HEK293 (cell line): ENCODE measurements at regions of chr5 and their contacts with region 1.

Region 1: DNA sequence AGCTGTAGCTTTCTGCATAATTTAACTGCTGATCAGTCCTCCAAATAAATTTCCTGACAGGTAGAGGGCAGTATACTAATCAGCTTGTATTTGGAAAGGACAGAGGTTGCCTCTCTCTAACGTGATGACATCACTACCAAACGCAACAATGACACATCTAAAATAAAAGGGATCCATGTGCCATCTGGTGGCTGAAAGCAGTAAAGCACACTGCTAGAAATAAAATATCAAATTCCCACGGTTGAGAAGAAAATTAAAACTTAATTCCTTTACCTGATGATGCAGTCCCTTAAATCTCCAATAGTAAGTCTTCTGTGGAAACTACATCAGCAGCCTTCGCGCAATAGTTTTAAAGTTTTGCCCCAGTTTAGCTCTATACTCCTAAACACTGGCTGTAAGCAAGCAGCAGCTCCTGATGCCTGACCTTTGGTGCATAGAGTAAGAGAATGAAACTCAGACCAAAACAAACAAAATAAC is 54.5 kb downstream of the DIAPH1 start:
- H3K4me3 ChIP-seq: no peak overlapping the region
- H3K27ac ChIP-seq: no peak overlapping the region
- H3K4me1 ChIP-seq: no peaks in the 10 kb centered on the region
- CTCF ChIP-seq: peak; percentile 76

Region 2: GRCh38 chr5:141234109-141234667 is 330.1 kb before region 1 on chr5:
- CTCF ChIA-PET with region 1: interaction called, 19 read pairs
- POLR2A ChIA-PET with region 1: no interaction called
- H3K4me3 ChIP-seq: peak overlapping the region; percentile 33
- H3K27ac ChIP-seq: no peak overlapping the region
- H3K4me1 ChIP-seq: no peaks in the 10 kb centered on the region
- CTCF ChIP-seq: no peak

Region 3: GRCh38 chr5:141349917-141350619 is 214.2 kb before region 1 on chr5 and contains the start of gene PCDHGB1:
- CTCF ChIA-PET with region 1: interaction called, 27 read pairs
- POLR2A ChIA-PET with region 1: interaction called, 4 read pairs
- H3K4me3 ChIP-seq: peak within 1 kb of the TSS; percentile 34
- H3K27ac ChIP-seq: no peak within 1 kb of the TSS
- H3K4me1 ChIP-seq: peaks cover 2% of the 10 kb centered on the region; the same call in 1 of the 2 replicates
- CTCF ChIP-seq: peak; percentile 47; the same call in 1 of the 2 replicates

Region 4: GRCh38 chr5:141402553-141403260 is 161.5 kb before region 1 on chr5 and contains the start of gene PCDHGA9:
- CTCF ChIA-PET with region 1: interaction called, 57 read pairs
- POLR2A ChIA-PET with region 1: no interaction called
- H3K4me3 ChIP-seq: no peak within 1 kb of the TSS
- H3K27ac ChIP-seq: no peak within 1 kb of the TSS
- H3K4me1 ChIP-seq: no peaks in the 10 kb centered on the region
- CTCF ChIP-seq: no peak

Region 5: DNA sequence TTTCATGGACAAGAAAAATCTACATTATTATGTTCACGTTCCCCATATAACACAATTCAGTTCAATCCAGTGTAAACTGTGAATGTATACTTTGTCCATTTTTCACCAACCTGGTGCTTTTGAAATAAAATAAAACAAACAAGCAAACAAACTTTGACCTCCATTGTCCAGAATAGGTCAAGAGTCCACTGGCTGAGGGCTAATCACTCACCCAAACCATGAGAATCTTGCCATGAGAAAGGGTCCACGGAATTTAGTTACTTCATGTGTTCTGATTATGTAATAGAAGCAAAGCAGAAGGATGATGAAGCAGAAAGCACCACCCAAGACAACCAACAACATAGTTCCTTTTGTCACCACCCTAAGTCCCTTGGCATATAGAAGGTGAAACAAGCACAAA is 25.9 kb after region 1 on chr5:
- CTCF ChIA-PET with region 1: interaction called, 11 read pairs
- POLR2A ChIA-PET with region 1: no interaction called
- H3K4me3 ChIP-seq: no peak overlapping the region
- H3K27ac ChIP-seq: no peak overlapping the region
- H3K4me1 ChIP-seq: peaks cover 3% of the 10 kb centered on the region; the same call in 1 of the 2 replicates
- CTCF ChIP-seq: no peak

Region 6: GRCh38 chr5:141636413-141637122 is 72.3 kb after region 1 on chr5 and contains the starts of genes HDAC3 and RELL2:
- CTCF ChIA-PET with region 1: interaction called, 10 read pairs
- POLR2A ChIA-PET with region 1: interaction called, 3 read pairs
- H3K4me3 ChIP-seq: peak within 1 kb of the TSS; percentile 97
- H3K27ac ChIP-seq: peak within 1 kb of the TSS; percentile 63; the same call in 1 of the 2 replicates
- H3K4me1 ChIP-seq: peaks cover 6% of the 10 kb centered on the region
- CTCF ChIP-seq: no peak